CD4-positive, alpha-beta T cell (primary cell): ENCODE measurements at regions of chr6 and their contacts with region 1.

Region 1: DNA sequence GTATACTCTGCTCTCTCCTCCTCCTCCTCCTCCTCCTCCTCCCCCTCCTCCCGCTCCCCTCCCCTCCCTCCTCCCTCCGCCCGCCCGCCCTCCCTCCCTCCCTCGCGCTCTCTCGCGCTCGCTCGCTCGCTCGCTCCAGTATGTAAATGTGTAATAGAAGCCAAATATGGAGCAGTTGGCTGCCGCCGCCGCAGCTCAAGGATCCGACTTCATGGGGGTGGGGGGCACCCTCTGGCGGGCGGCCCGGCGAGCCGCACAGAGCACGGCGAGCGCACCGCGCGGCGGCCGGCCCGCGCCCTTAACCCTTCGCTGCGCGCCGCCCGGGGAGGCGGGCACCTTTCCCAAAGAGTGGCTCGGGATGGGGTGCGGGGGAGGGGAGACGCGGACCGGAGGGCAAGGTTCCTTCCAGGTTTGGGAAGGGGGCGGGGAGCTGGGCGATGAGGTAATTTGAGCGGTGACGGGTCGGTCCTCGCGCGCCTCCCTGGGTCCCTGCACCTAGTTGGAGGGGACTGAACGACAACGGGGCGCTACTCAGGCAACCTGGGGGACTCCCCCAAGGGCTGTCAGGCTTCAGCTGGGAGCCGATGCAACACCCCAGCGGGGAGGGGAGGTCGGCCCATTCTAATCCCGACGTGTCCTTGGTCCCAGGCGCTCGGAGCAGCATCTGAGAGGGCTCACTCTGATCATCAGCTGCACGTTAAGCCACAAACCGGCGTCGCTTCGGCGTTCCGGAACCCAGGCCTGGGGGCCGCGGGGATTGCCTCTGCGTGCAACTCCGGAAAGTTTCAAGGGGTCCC is 409 bp upstream of the ATXN1 start:
- DNase-seq: peak; percentile 70 to 94 (median 80)
- ATAC-seq: peak; percentile 58
- H3K4me3 ChIP-seq: peak overlapping the region; percentile 72
- H3K4me3 Mint-ChIP-seq: peak overlapping the region; percentile 99
- H3K27ac ChIP-seq: peak overlapping the region; percentile 97 to 98
- H3K27ac Mint-ChIP-seq: peak overlapping the region; percentile 98
- H3K4me1 ChIP-seq: peaks cover 23% of the 10 kb centered on the region
- H3K4me1 Mint-ChIP-seq: peaks cover 65% of the 10 kb centered on the region
- H3K27me3 ChIP-seq: no peaks in the 10 kb centered on the region
- H3K27me3 Mint-ChIP-seq: peaks cover 4% of the 10 kb centered on the region
- CTCF ChIP-seq: peak; percentile 5

Region 2: DNA sequence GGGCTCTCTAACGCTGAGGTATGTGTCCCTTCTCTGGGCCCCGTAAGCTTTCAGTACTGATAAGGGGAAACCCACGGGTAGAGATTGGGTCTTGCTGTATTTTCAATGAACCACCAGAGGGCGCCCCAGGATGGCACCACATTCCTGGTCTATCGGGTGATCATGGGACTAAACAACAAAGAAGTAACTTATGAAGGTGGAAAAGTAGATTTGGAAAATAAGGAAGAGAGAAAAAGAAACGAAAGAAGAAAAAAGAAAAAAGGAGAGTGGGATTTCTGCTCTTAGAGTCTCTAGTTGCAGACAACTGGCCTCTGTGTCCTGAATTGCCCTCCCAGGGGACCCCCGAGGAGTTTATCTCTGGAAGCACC is 429.5 kb before region 1 on chr6:
- CTCF ChIA-PET with region 1: interaction called, 6 read pairs
- POLR2A ChIA-PET with region 1: no interaction called
- intact Hi-C with region 1: loop called in 1 of 2 experiments (anchors 1 kb)
- DNase-seq: peak; percentile 68 to 92 (median 76)
- ATAC-seq: peak; percentile 96
- H3K4me3 ChIP-seq: peak overlapping the region; percentile 10
- H3K4me3 Mint-ChIP-seq: no peak overlapping the region
- H3K27ac ChIP-seq: no peak overlapping the region
- H3K27ac Mint-ChIP-seq: no peak overlapping the region
- H3K4me1 ChIP-seq: peaks cover 17% of the 10 kb centered on the region
- H3K4me1 Mint-ChIP-seq: no peaks in the 10 kb centered on the region
- H3K27me3 ChIP-seq: no peaks in the 10 kb centered on the region
- H3K27me3 Mint-ChIP-seq: no peaks in the 10 kb centered on the region
- CTCF ChIP-seq: peak; percentile 90

Region 3: DNA sequence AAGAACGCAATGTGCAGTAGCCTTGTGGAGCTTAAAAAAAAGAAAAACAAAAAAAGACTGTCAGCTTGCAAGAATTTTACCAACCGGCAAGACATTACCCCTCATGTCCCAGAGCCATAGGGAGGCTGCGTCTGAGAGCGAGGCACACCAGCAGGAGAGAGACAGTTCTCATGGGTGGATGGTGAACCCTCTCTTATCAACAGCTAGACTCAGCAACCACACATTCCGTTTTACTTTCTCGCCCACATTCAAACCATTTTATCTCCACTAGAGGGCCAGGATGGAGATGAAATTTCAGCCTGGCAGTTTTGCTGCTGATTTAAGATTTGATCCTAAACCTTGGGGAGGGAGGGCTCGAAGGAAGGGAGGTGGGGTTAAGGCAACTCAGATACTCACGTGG is 247.4 kb before region 1 on chr6:
- CTCF ChIA-PET with region 1: interaction called, 9 read pairs
- POLR2A ChIA-PET with region 1: interaction called, 7 read pairs
- intact Hi-C with region 1: loop called in 1 of 2 experiments (anchors 5 kb)
- DNase-seq: peak in 5 of 14 experiments; percentile 7 to 67 (median 59)
- ATAC-seq: peak; percentile 58
- H3K4me3 ChIP-seq: no peak overlapping the region
- H3K4me3 Mint-ChIP-seq: peak overlapping the region; percentile 5
- H3K27ac ChIP-seq: no peak overlapping the region
- H3K27ac Mint-ChIP-seq: peak overlapping the region; percentile 73
- H3K4me1 ChIP-seq: peaks cover 32% of the 10 kb centered on the region
- H3K4me1 Mint-ChIP-seq: peaks cover 54% of the 10 kb centered on the region
- H3K27me3 ChIP-seq: no peaks in the 10 kb centered on the region
- H3K27me3 Mint-ChIP-seq: no peaks in the 10 kb centered on the region
- CTCF ChIP-seq: peak; percentile 44

Region 4: DNA sequence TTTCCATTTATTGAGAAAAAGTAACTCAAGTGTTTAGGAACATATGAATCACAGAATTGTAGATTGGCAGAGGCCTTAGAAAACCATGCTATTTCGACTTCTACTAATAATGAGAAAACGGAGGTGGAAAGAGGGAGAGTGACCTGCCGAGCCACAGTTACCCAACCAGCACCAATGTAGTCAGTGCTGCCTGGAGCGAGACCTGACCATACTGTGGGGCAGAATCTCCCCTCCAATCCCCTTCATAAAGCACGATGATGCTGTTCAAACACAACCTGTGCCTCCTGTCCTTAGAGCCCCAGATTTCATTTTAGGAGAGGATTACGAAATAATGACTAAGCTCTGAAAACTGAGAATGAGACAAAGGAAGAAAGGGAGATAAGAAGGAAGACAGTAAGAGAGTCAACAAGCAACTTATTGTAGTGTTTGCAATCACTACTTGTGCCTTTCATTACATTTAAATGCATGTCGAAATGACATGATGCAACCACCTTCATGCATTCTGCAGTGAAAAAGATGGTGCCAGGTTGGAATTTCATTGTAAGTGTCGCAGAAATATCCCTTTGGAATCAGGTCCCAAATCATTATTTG is 71.0 kb before region 1 on chr6:
- CTCF ChIA-PET with region 1: interaction called, 4 read pairs
- POLR2A ChIA-PET with region 1: interaction called, 12 read pairs
- intact Hi-C with region 1: no loop called
- DNase-seq: no peak
- ATAC-seq: no peak
- H3K4me3 ChIP-seq: no peak overlapping the region
- H3K4me3 Mint-ChIP-seq: peak overlapping the region; percentile 37
- H3K27ac ChIP-seq: peak overlapping the region in 1 of 2 donors; percentile 7
- H3K27ac Mint-ChIP-seq: peak overlapping the region; percentile 64
- H3K4me1 ChIP-seq: peaks cover 37% of the 10 kb centered on the region
- H3K4me1 Mint-ChIP-seq: peaks cover 71% of the 10 kb centered on the region
- H3K27me3 ChIP-seq: no peaks in the 10 kb centered on the region
- H3K27me3 Mint-ChIP-seq: no peaks in the 10 kb centered on the region
- CTCF ChIP-seq: no peak

Region 5: DNA sequence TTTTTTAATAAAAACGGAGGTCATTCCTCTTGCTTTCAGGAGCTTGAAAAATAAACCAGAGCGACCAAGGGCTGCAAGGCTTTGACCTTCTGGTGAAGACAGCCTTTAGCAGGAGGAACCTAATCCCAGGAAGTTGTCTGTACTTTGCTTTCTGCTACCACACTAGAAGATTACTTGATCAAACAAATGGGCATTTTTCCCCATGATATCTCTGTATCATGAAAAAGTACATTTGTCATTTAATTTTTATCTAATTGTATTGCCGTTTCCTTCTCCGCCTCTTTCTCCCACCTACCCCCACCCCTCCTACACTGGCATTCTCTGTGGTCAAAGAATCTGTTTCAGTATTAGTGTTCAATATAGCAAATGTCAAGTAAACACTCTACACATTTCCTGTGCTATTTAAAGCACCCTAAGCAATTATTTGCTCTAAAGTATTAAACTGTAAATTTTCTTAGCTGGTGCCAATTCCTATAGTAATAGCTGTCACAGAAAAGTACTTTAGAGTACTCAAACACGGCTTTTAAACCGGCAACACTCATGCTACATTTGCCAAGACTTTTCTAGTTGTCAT is 30.1 kb before region 1 on chr6:
- CTCF ChIA-PET with region 1: interaction called, 18 read pairs
- POLR2A ChIA-PET with region 1: interaction called, 33 read pairs
- intact Hi-C with region 1: no loop called
- DNase-seq: peak in 4 of 14 experiments; percentile 26 to 74 (median 47)
- ATAC-seq: peak; percentile 59
- H3K4me3 ChIP-seq: peak overlapping the region; percentile 21
- H3K4me3 Mint-ChIP-seq: peak overlapping the region; percentile 45
- H3K27ac ChIP-seq: peak overlapping the region in 1 of 2 donors; percentile 47
- H3K27ac Mint-ChIP-seq: peak overlapping the region; percentile 13
- H3K4me1 ChIP-seq: peaks cover 27% of the 10 kb centered on the region
- H3K4me1 Mint-ChIP-seq: peaks cover 49% of the 10 kb centered on the region
- H3K27me3 ChIP-seq: no peaks in the 10 kb centered on the region
- H3K27me3 Mint-ChIP-seq: no peaks in the 10 kb centered on the region
- CTCF ChIP-seq: no peak

Region 6: DNA sequence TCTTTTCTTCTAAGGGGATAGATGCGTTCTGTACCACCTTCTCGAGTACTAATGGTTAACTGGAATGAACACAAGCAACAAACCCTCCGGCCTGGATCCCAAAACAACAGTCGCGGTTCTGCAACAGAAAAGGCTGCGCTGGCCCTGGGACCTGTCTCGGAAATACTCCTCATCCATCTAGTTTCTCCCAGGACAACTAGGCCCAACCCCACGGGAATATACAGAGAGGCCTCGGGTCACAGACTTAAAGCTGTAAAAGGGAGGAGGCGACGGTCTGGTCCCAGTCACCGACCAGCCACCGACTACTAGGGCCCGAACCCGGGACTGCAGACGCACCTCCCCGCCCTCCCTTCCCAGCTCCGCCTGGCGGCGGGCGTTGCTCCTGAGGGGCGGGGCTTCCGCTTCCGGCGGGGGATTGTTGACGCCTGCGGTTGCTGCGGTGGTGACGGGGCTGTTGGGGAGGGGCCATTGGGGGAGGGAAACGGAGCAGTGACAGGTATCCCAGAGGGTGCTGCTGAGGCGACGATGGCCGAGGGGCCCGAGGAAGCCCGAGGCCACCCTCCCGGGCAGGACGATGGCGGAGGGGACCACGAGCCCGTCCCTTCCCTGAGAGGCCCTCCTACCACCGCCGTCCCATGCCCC is 838.3 kb after region 1 on chr6 and contains the start of gene FAM8A1:
- CTCF ChIA-PET with region 1: no interaction called
- POLR2A ChIA-PET with region 1: interaction called, 3 read pairs
- intact Hi-C with region 1: loop called in 1 of 2 experiments (anchors 10 kb)
- DNase-seq: peak; percentile 93 to 98 (median 96)
- ATAC-seq: peak; percentile 88
- H3K4me3 ChIP-seq: peak within 1 kb of the TSS; percentile 69
- H3K4me3 Mint-ChIP-seq: peak within 1 kb of the TSS; percentile 92
- H3K27ac ChIP-seq: peak within 1 kb of the TSS; percentile 48 to 85
- H3K27ac Mint-ChIP-seq: peak within 1 kb of the TSS; percentile 86
- H3K4me1 ChIP-seq: peaks cover 24% of the 10 kb centered on the region
- H3K4me1 Mint-ChIP-seq: peaks cover 50% of the 10 kb centered on the region
- H3K27me3 ChIP-seq: no peaks in the 10 kb centered on the region
- H3K27me3 Mint-ChIP-seq: no peaks in the 10 kb centered on the region
- CTCF ChIP-seq: peak; percentile 29
- total RNA-seq, gene FAM8A1: 31.4 to 31.9 TPM

Region 7: GRCh38 chr6:18264219-18264922 is 1502.7 kb after region 1 on chr6 and contains the start of gene DEK:
- CTCF ChIA-PET with region 1: no interaction called
- POLR2A ChIA-PET with region 1: no interaction called
- intact Hi-C with region 1: loop called in 1 of 2 experiments (anchors 10 kb)
- DNase-seq: peak; percentile 69 to 91 (median 80)
- ATAC-seq: peak; percentile 68
- H3K4me3 ChIP-seq: peak within 1 kb of the TSS; percentile 91
- H3K4me3 Mint-ChIP-seq: peak within 1 kb of the TSS; percentile 98
- H3K27ac ChIP-seq: peak within 1 kb of the TSS; percentile 85 to 91
- H3K27ac Mint-ChIP-seq: peak within 1 kb of the TSS; percentile 98
- H3K4me1 ChIP-seq: peaks cover 37% of the 10 kb centered on the region
- H3K4me1 Mint-ChIP-seq: peaks cover 53% of the 10 kb centered on the region
- H3K27me3 ChIP-seq: no peaks in the 10 kb centered on the region
- H3K27me3 Mint-ChIP-seq: no peaks in the 10 kb centered on the region
- CTCF ChIP-seq: peak; percentile 63
- total RNA-seq, gene DEK: 52.7 to 56.7 TPM